Naive thymus-derived CD4-positive, alpha-beta T cell (primary cell): ENCODE measurements at regions of chr11 and their contacts with region 1.

Region 1: GRCh38 chr11:45102810-45103621 is 43.4 kb upstream of the PRDM11 start:
- DNase-seq: peak; percentile 33 to 69 (median 61)
- ATAC-seq: peak; percentile 85
- H3K4me3 ChIP-seq: peak overlapping the region; percentile 6
- H3K4me3 Mint-ChIP-seq: peak overlapping the region in 3 of 10 donors; percentile 35 to 82 (median 71)
- H3K27ac ChIP-seq: no peak overlapping the region
- H3K27ac Mint-ChIP-seq: peak overlapping the region in 4 of 9 donors; percentile 1 to 87 (median 72)
- H3K4me1 ChIP-seq: peaks cover 8 to 13% of the 10 kb centered on the region in 2 donors
- H3K4me1 Mint-ChIP-seq: peaks cover 8 to 24% (median 12%) of the 10 kb centered on the region in 7 donors
- H3K27me3 ChIP-seq: no peaks in the 10 kb centered on the region
- H3K27me3 Mint-ChIP-seq: peaks cover 0 to 24% (median 15%) of the 10 kb centered on the region in 5 donors

Region 2: DNA sequence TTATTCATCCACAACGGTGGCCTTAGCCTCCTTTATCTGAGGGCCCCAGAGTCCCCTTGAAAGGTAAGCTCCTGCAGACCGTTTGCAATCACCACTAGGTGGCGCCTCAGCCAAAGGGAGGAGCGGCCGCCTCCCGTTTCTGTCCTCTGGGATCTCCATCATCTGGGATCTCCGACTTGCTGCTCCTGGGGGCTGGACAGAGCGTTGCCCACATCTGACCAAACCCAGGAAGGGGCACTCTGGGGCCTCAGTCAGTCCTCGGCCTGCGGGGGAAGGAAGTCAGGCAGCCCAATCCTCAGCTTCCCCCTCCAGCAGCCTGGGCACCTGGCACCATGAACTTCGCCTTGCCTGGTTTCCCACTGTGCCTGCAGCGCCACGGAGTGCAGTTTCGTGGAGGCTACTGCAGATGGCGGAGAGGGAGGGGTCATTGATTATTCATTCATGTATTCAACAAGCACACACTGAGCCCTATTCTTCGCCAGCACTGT is 175.8 kb before region 1 on chr11:
- CTCF ChIA-PET with region 1: interaction called, 567 read pairs
- POLR2A ChIA-PET with region 1: no interaction called
- intact Hi-C with region 1: loop called (anchors 1 to 2 kb)
- DNase-seq: peak in 7 of 9 donors; percentile 24 to 59 (median 44)
- ATAC-seq: peak; percentile 63
- H3K4me3 ChIP-seq: no peak overlapping the region
- H3K4me3 Mint-ChIP-seq: no peak overlapping the region
- H3K27ac ChIP-seq: no peak overlapping the region
- H3K27ac Mint-ChIP-seq: peak overlapping the region in 1 of 9 donors; percentile 38
- H3K4me1 ChIP-seq: no peaks in the 10 kb centered on the region
- H3K4me1 Mint-ChIP-seq: peaks cover 0 to 4% (median 0%) of the 10 kb centered on the region in 7 donors
- H3K27me3 ChIP-seq: no peaks in the 10 kb centered on the region
- H3K27me3 Mint-ChIP-seq: no peaks in the 10 kb centered on the region

Region 3: DNA sequence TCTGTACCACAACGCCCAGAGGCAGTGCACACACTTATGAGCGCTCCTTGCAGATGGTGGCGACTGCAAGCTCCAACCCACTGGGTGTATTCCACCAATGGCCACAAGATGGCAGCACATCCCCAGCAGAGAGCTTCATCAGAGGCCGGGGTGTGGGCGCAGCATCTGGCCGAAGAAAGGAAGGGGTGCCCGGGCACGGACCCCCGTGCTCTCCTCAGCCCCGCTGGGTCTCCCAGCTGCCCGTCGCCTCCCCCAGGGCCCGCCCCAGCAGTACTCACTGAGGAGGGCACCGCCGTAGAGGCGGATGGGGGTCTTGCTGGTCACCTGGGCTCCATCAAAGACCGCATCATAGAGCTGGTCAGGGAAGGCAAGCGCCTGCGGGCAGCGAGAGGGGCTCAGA is 166.5 kb before region 1 on chr11:
- CTCF ChIA-PET with region 1: interaction called, 567 read pairs
- POLR2A ChIA-PET with region 1: interaction called, 10 read pairs
- intact Hi-C with region 1: loop called (anchors 1 kb)
- DNase-seq: peak; percentile 51 to 86 (median 76)
- ATAC-seq: peak; percentile 85
- H3K4me3 ChIP-seq: no peak overlapping the region
- H3K4me3 Mint-ChIP-seq: no peak overlapping the region
- H3K27ac ChIP-seq: no peak overlapping the region
- H3K27ac Mint-ChIP-seq: no peak overlapping the region
- H3K4me1 ChIP-seq: peaks cover 0 to 5% of the 10 kb centered on the region in 2 donors
- H3K4me1 Mint-ChIP-seq: peaks cover 0 to 4% (median 0%) of the 10 kb centered on the region in 7 donors
- H3K27me3 ChIP-seq: no peaks in the 10 kb centered on the region
- H3K27me3 Mint-ChIP-seq: no peaks in the 10 kb centered on the region

Region 4: DNA sequence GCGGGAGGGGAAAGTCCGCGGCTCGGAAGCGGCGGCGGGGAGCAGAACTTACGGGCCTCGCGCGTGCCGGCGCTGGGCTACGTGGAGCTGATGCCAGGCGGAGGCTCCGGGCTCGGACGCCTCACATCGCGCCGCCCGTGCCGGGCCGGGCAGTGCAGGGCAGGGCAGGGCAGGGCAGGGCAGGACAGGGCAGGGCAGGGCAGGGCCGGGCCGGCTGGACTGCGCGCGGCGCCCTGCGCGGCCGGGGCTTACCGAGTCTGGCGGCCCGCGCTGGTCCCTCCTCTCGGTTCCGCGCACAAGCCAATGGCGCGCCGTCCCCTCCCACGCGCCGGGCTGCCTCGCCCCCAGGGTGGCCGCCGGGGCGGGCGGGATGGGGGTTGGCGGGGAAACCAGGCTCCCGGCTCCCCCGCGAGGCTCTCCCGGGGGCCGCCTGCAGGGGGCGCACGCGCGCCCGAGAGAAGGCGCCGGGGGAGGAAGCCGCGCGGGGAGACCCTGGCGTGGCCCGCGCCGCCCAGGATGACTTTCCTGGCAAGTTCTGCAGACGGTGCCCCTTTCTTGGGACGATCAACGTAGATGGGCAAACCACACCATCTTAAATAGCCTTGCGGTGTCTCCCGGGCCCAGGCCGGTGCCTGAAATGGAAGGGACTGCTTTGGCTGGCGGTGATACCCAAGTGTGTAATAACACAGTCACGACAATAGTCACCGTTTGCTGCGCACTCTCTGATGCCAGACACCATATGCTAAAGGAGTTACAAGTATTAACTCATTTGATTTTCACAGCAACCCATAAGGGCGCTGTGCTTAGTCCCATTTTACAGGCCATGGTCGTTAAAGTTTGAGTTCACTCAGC is 152.2 kb before region 1 on chr11 and contains the start of gene TP53I11:
- CTCF ChIA-PET with region 1: interaction called, 8 read pairs
- POLR2A ChIA-PET with region 1: no interaction called
- intact Hi-C with region 1: loop called in 1 of 2 experiments (anchors 5 kb)
- DNase-seq: peak in 8 of 9 donors; percentile 27 to 79 (median 32)
- ATAC-seq: peak; percentile 78
- H3K4me3 ChIP-seq: peak within 1 kb of the TSS; percentile 62
- H3K4me3 Mint-ChIP-seq: peak within 1 kb of the TSS; percentile 58 to 87 (median 81)
- H3K27ac ChIP-seq: no peak within 1 kb of the TSS
- H3K27ac Mint-ChIP-seq: peak within 1 kb of the TSS in 2 of 9 donors; percentile 48 to 76
- H3K4me1 ChIP-seq: peaks cover 0 to 6% of the 10 kb centered on the region in 2 donors
- H3K4me1 Mint-ChIP-seq: peaks cover 0 to 17% (median 6%) of the 10 kb centered on the region in 7 donors
- H3K27me3 ChIP-seq: no peaks in the 10 kb centered on the region
- H3K27me3 Mint-ChIP-seq: peaks cover 0 to 37% (median 8%) of the 10 kb centered on the region in 5 donors
- total RNA-seq, gene TP53I11: 0.40 to 7.6 (median 2.0) TPM

Region 5: DNA sequence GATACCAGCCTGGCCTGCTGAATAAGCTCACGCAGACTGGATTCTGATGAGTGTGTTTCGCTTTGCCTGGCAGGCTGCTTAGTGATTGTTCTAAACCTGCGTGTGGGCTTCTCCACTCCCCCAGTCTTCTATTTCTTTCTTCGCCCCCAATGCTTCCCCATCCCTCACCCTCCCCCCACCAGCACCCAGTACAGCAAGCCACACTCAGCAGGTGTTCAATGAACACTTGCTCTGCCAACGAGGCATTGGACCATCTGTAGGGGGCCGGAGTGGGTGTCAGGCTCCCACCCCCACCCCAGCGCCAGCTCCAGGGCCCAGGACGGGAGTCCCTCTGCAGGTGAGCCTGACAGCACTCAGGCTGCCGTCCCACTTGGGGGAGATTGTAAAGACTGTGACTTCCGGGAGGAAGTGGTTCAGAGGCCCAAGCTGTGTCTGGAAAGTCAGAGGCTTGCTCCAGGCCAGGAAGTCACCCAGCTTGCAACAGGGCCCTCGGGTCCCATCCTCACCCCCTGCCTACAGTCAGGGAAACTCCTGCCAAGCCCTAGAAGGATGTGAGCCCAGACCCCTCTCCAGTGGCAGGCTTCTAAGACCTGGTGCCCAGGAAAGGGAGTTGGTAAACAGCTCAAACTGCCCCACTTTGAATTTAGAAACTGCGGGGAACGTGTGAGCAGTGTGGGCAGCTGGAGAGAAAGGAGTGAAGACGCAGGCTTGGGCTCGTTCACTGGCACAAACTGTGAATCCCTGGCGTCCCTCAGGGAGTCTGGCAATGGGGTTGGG is 22.9 kb before region 1 on chr11:
- CTCF ChIA-PET with region 1: interaction called, 22 read pairs
- POLR2A ChIA-PET with region 1: interaction called, 6 read pairs
- intact Hi-C with region 1: loop called in 1 of 2 experiments (anchors 2 kb)
- DNase-seq: peak; percentile 22 to 70 (median 65)
- ATAC-seq: peak; percentile 86
- H3K4me3 ChIP-seq: peak overlapping the region; percentile 42
- H3K4me3 Mint-ChIP-seq: peak overlapping the region; percentile 39 to 82 (median 72)
- H3K27ac ChIP-seq: peak overlapping the region; percentile 60
- H3K27ac Mint-ChIP-seq: peak overlapping the region; percentile 88 to 96 (median 93)
- H3K4me1 ChIP-seq: peaks cover 32 to 62% of the 10 kb centered on the region in 2 donors
- H3K4me1 Mint-ChIP-seq: peaks cover 29 to 63% (median 55%) of the 10 kb centered on the region in 7 donors
- H3K27me3 ChIP-seq: no peaks in the 10 kb centered on the region
- H3K27me3 Mint-ChIP-seq: peaks cover 0 to 4% (median 0%) of the 10 kb centered on the region in 5 donors

Region 6: DNA sequence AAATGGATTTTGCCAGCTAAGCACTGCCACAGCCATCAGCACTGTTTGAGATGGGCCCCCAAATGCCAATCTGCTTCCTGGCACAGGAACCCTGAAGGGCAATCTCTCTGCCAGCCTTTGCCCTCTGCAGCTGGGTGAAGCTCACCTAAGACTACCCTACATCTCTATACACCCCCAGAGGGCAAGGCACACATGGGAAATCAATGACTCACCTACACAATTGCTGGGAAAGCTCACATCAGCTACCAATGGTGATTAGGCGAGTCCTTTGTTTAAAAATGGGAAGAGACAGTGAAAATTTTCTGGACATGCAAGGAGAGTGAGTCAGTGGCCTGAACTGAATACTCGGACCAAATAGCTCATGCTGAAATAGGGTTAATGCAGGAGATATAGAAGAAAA is 30.9 kb after region 1 on chr11:
- CTCF ChIA-PET with region 1: no interaction called
- POLR2A ChIA-PET with region 1: no interaction called
- intact Hi-C with region 1: no loop called
- DNase-seq: no peak
- ATAC-seq: no peak
- H3K4me3 ChIP-seq: no peak overlapping the region
- H3K4me3 Mint-ChIP-seq: no peak overlapping the region
- H3K27ac ChIP-seq: no peak overlapping the region
- H3K27ac Mint-ChIP-seq: no peak overlapping the region
- H3K4me1 ChIP-seq: no peaks in the 10 kb centered on the region
- H3K4me1 Mint-ChIP-seq: no peaks in the 10 kb centered on the region
- H3K27me3 ChIP-seq: peaks cover 0 to 6% of the 10 kb centered on the region in 2 donors
- H3K27me3 Mint-ChIP-seq: peaks cover 29 to 56% (median 42%) of the 10 kb centered on the region in 5 donors